ENCODE measurements at regions of chr13 and their contacts with region 1.

Region 1: DNA sequence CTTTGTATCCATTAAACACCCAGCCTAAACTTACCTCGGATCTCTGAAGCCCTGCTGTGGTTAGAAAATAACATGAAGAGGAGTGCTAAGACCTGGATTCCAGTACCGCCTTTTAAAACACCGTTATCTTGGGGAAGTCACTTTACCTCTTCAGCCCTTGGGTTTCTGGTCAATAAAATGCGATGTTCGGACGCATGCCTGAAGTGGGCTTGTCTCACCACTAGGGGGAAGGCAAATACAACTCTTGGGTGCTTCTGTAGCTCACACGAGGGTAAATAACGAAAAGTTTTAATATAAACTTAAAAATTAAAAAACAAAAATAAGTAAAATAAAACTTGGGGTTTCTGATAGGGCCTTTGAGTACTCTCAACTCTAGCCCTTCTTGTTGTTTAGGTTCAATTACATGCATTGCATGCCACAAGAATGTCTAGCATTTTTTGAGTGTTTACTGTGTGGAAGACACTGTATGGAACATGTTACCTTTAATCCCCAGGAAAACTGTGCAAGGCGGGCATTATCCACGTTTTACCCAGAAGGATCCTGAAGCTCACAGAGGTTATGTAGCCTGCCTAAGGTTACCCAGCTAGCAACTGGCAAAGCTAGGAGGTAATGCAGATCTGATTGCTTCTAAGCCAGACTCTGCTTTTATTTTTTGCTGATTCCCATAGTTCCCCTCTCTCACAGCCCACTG is 240.4 kb downstream of the LMO7 start:
- DNase-seq: peak in 1 of 2 donors; percentile 75
- H3K4me3 ChIP-seq: no peak overlapping the region
- H3K27ac ChIP-seq: no peak overlapping the region
- H3K4me1 ChIP-seq: no peaks in the 10 kb centered on the region
- H3K27me3 ChIP-seq: no peaks in the 10 kb centered on the region
- CTCF ChIP-seq: peak; percentile 69 to 93 (median 87)

Region 2: GRCh38 chr13:75830842-75831241 is 45.7 kb before region 1 on chr13:
- intact Hi-C with region 1: no loop called
- DNase-seq: no peak
- H3K4me3 ChIP-seq: no peak overlapping the region
- H3K27ac ChIP-seq: no peak overlapping the region
- H3K4me1 ChIP-seq: no peaks in the 10 kb centered on the region
- H3K27me3 ChIP-seq: no peaks in the 10 kb centered on the region
- CTCF ChIP-seq: no peak

Region 3: GRCh38 chr13:76016799-76017400 is 140.4 kb after region 1 on chr13:
- intact Hi-C with region 1: loop called (anchors 10 kb)
- DNase-seq: no peak
- H3K4me3 ChIP-seq: no peak overlapping the region
- H3K27ac ChIP-seq: no peak overlapping the region
- H3K4me1 ChIP-seq: peaks cover 0 to 14% of the 10 kb centered on the region in 2 donors
- H3K27me3 ChIP-seq: no peaks in the 10 kb centered on the region
- CTCF ChIP-seq: peak in 1 of 3 experiments; percentile 21

Region 4: GRCh38 chr13:76473552-76474134 is 597.1 kb after region 1 on chr13:
- intact Hi-C with region 1: loop called (anchors 1 kb)
- DNase-seq: peak in 1 of 2 donors; percentile 87
- H3K4me3 ChIP-seq: no peak overlapping the region
- H3K27ac ChIP-seq: no peak overlapping the region
- H3K4me1 ChIP-seq: no peaks in the 10 kb centered on the region
- H3K27me3 ChIP-seq: no peaks in the 10 kb centered on the region
- CTCF ChIP-seq: peak; percentile 69 to 78 (median 77)

Region 5: DNA sequence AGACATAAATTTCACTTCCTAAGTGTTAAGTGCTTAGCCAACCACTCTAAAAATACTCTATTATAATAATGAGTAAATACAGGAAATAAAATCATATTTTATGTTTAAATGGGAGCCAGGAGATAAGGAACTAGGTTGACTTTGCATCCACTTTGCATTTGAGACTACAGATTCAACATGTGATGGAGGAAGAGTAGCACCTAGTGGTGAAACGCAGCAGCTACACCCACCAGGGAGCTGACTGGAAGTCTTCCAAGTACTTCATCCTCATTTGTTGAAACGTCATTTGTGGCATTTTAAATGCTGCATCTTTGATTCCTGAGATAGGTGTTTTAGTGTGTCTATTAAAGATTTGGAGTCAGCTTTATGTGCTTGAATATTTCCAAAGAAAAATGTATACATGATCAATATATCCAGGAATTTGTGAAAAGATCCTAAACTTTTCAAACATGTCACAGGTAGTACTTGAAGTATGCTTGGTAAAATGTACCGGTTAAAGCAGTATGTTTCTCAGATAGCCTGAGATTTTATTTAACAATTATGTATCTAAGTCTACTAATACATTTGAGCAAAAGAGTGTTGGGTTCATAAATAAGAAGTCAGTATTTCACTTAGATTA is 1027.1 kb after region 1 on chr13:
- intact Hi-C with region 1: loop called (anchors 2 kb)
- DNase-seq: peak in 1 of 2 donors; percentile 85
- H3K4me3 ChIP-seq: no peak overlapping the region
- H3K27ac ChIP-seq: no peak overlapping the region
- H3K4me1 ChIP-seq: no peaks in the 10 kb centered on the region
- H3K27me3 ChIP-seq: no peaks in the 10 kb centered on the region
- CTCF ChIP-seq: peak; percentile 87 to 99 (median 96)

Region 6: DNA sequence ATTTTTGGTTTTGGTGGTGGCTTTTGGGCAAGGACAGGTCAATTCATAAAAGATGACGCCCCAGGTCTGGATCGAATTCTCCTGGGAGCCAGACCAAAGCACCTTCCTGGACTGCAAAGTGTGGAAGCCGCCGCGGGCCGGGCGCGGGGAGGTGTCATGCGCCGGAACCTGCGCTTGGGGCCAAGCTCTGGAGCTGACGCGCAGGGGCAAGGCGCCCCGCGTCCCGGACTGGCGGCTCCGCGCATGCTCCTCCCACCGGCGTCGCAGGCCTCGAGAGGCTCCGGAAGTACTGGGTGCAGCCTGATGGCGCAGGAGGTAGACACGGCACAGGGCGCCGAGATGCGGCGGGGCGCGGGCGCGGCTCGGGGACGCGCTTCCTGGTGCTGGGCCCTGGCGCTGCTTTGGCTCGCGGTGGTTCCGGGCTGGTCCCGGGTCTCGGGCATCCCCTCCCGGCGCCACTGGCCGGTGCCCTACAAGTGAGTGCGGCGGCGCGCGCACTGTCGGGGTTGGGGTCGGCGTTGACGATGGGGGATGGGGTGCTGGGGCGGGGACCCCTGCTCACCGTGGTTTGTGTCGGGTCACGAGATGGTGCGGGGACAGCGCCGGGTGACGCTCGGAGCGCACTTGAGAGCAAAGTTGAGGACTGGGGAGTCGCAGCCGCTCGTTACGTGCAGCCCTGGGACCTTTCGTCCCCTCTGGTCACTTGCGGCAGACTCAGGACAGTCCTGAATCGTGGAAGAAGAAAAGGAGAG is 1115.5 kb after region 1 on chr13 and contains the start of gene CLN5:
- intact Hi-C with region 1: loop called (anchors 10 kb)
- DNase-seq: peak; percentile 82 to 97
- H3K4me3 ChIP-seq: peak within 1 kb of the TSS; percentile 68 to 75
- H3K27ac ChIP-seq: peak within 1 kb of the TSS; percentile 80 to 93
- H3K4me1 ChIP-seq: peaks cover 0 to 9% of the 10 kb centered on the region in 2 donors
- H3K27me3 ChIP-seq: no peaks in the 10 kb centered on the region
- CTCF ChIP-seq: no peak
- total RNA-seq, gene CLN5: 2.0 TPM

Measured in ascending aorta (tissue), 2 donors.